ENCODE measurements at regions of chr6 and their contacts with region 1.

Region 1: DNA sequence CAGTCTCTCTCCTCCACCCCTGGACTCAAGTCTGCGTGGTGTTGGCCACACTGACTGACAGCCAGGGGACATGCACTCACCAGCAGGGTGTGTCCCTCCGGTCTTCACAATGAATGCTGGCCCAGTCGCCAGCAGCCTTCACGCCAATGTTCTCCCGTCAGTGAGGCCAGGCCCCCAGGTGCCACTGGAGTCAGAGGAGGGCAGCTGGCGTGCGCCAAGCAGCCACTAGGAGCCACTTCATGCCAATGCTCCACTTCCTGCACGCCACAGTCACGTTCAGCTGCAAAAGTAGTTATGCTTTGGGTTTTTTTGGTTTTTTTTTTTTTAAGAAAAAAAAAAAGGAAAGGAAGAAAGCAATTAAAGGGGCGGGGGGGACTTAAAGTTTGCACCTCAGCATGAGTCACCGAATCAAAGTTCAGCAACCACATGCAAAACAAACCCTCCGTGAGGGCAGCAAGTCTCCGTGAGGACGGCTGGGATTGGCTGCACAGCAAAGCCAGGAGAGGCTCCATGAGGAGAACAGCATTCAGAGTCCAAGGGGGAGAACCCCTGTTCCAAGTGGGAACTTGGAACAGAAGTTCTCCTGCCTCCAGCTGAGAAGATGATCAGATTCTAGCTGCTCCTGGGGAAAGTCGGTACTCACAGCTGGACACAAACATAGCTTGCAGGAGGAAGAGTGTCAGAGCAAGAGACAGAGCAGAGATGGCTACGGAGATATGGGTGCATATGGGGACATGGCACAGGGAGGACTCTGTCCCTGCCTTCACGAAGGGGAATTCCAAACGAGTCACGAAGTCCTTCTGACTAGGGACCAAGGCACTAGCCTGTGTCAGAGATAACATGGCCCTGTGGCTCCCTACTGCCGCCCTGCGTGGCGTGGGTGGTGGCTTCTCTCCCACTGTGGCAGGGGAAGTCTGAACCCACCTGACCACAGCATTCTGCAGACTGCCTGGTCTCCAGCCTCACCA is at the start of gene ZC3H12D:
- DNase-seq: peak; percentile 68 to 93 (median 81)
- H3K4me3 ChIP-seq: peak within 1 kb of the TSS; percentile 68
- H3K4me3 Mint-ChIP-seq: peak within 1 kb of the TSS; percentile 88 to 99 (median 95)
- H3K27ac ChIP-seq: peak within 1 kb of the TSS; percentile 73
- H3K27ac Mint-ChIP-seq: peak within 1 kb of the TSS; percentile 98 to 100 (median 99)
- H3K4me1 ChIP-seq: peaks cover 34% of the 10 kb centered on the region
- H3K4me1 Mint-ChIP-seq: peaks cover 35 to 56% (median 42%) of the 10 kb centered on the region in 3 donors
- H3K27me3 ChIP-seq: no peaks in the 10 kb centered on the region
- H3K27me3 Mint-ChIP-seq: no peaks in the 10 kb centered on the region
- total RNA-seq, gene ZC3H12D: 83.5 to 84.5 TPM

Region 2: DNA sequence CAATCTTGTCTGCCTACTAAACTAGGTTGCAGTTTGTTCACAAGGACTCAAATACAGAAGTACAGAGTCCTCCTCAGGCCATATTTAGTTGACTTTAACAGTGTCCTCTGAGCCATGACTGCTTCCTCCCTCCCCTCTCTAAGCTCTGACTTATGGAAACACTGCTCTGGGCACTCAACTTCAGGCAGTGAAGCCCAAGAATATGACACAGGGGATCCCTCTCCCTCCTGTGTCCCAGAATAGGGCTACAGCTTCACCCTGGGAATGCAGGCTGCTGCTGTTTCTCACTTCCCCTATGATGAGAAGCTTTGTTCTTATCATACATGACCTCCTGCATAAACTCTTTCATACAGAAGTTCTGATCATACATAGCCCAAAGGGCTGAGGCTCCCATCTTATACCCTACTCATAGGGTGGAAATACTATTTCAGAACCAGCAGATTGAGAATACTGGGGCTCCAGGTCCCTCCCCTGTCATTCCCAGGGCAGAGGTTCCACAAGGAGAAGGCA is 835.5 kb before region 1 on chr6:
- CTCF ChIA-PET with region 1: no interaction called
- POLR2A ChIA-PET with region 1: interaction called, 11 read pairs
- DNase-seq: no peak
- H3K4me3 ChIP-seq: no peak overlapping the region
- H3K4me3 Mint-ChIP-seq: peak overlapping the region in 1 of 7 donors; percentile 63
- H3K27ac ChIP-seq: no peak overlapping the region
- H3K27ac Mint-ChIP-seq: no peak overlapping the region
- H3K4me1 ChIP-seq: no peaks in the 10 kb centered on the region
- H3K4me1 Mint-ChIP-seq: no peaks in the 10 kb centered on the region
- H3K27me3 ChIP-seq: no peaks in the 10 kb centered on the region
- H3K27me3 Mint-ChIP-seq: peaks cover 4 to 53% of the 10 kb centered on the region in 2 donors

Region 3: DNA sequence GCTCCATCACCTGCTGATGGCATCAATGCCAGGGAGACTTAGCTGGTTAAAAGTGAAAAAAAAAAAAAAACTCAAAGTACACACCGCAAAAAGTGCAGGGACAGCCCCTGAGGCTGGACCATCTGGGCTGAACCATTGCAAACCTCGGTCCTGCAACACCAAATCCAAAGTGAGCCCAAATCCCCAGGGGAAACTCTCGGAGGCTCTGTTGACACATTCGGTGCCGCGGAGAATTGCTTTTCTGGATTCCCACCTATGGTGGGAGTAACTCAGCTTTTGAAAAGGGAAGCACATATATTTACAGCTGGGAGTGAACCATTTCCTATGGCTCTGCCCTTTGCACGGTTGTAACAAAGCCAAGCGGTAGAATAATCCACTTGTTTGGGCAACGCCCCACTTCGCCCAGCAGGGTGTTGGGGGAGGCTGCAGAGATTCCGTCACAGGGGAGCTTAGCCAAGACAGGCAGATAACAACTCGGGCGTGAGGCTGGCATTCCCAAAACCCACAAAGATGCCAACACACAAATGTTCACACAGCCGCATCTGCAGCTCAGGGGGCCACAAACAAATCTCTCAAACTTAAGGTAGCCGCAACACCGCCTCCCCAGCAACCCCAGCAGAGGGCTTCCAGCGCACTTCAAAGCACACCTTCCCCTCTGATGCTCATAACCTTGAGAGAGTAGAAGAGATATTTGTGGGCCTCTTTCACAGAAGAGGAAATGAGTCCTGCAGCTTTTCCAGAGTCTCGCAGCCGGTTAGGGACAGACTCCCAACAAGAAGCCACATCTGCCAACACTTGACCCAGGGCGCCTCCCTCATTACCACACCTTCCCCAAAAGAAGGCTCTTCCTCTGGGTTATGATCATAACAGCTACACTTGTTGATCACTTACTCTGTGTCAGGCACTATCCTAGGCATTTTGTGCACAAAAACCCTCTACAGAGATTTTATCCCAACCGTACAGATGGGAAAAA is 11.7 kb before region 1 on chr6:
- CTCF ChIA-PET with region 1: interaction called, 20 read pairs
- POLR2A ChIA-PET with region 1: no interaction called
- DNase-seq: peak in 1 of 5 donors; percentile 36
- H3K4me3 ChIP-seq: no peak overlapping the region
- H3K4me3 Mint-ChIP-seq: peak overlapping the region in 5 of 7 donors; percentile 5 to 62 (median 33)
- H3K27ac ChIP-seq: no peak overlapping the region
- H3K27ac Mint-ChIP-seq: peak overlapping the region in 6 of 8 donors; percentile 22 to 85 (median 66)
- H3K4me1 ChIP-seq: peaks cover 30% of the 10 kb centered on the region
- H3K4me1 Mint-ChIP-seq: peaks cover 29 to 68% (median 51%) of the 10 kb centered on the region in 3 donors
- H3K27me3 ChIP-seq: no peaks in the 10 kb centered on the region
- H3K27me3 Mint-ChIP-seq: no peaks in the 10 kb centered on the region

Region 4: DNA sequence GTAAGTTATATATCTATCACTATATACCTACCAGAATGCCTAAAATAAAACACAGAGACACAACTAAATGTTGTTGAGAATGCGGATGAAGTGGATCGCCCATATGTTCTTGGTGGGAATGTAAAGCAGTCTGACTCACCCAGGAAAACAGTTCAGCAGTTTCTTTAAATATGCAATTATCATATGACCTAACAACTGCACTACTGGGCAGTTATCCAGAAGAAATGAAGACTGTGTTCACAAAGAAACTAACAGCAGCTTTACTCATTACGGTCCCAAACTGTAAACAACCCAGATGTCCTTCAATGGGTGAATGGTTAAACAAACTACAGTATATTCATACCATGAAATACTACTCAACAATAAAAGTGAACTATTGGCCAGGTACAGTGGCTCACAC is 14.0 kb after region 1 on chr6:
- CTCF ChIA-PET with region 1: interaction called, 44 read pairs
- POLR2A ChIA-PET with region 1: interaction called, 39 read pairs
- DNase-seq: no peak
- H3K4me3 ChIP-seq: no peak overlapping the region
- H3K4me3 Mint-ChIP-seq: no peak overlapping the region
- H3K27ac ChIP-seq: no peak overlapping the region
- H3K27ac Mint-ChIP-seq: peak overlapping the region in 6 of 8 donors; percentile 3 to 70 (median 24)
- H3K4me1 ChIP-seq: peaks cover 32% of the 10 kb centered on the region
- H3K4me1 Mint-ChIP-seq: peaks cover 14 to 53% (median 40%) of the 10 kb centered on the region in 3 donors
- H3K27me3 ChIP-seq: no peaks in the 10 kb centered on the region
- H3K27me3 Mint-ChIP-seq: no peaks in the 10 kb centered on the region

Region 5: DNA sequence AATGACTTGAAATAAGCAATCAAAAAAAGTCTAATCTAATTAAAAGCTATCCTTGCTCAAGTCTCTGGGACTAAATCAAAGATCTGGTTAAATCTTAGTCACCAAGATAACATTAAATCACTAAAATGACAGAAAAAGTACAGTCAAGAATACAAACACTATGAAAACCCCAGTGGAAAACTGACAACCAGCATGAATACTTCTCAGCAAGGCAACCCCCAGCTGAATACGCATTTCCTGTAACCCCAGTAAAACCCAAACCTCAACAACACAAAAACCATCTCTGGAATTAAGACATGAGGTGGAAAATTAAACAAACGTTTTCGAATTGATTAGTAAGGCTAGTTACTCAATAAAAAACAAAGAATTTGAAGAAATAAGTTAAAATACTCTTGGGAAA is 23.5 kb after region 1 on chr6:
- CTCF ChIA-PET with region 1: no interaction called
- POLR2A ChIA-PET with region 1: interaction called, 19 read pairs
- DNase-seq: peak in 3 of 5 donors; percentile 57 to 72 (median 65)
- H3K4me3 ChIP-seq: no peak overlapping the region
- H3K4me3 Mint-ChIP-seq: peak overlapping the region in 5 of 7 donors; percentile 9 to 73 (median 41)
- H3K27ac ChIP-seq: no peak overlapping the region
- H3K27ac Mint-ChIP-seq: peak overlapping the region in 7 of 8 donors; percentile 65 to 92 (median 83)
- H3K4me1 ChIP-seq: peaks cover 18% of the 10 kb centered on the region
- H3K4me1 Mint-ChIP-seq: peaks cover 25 to 30% (median 30%) of the 10 kb centered on the region in 3 donors
- H3K27me3 ChIP-seq: no peaks in the 10 kb centered on the region
- H3K27me3 Mint-ChIP-seq: no peaks in the 10 kb centered on the region

Region 6: DNA sequence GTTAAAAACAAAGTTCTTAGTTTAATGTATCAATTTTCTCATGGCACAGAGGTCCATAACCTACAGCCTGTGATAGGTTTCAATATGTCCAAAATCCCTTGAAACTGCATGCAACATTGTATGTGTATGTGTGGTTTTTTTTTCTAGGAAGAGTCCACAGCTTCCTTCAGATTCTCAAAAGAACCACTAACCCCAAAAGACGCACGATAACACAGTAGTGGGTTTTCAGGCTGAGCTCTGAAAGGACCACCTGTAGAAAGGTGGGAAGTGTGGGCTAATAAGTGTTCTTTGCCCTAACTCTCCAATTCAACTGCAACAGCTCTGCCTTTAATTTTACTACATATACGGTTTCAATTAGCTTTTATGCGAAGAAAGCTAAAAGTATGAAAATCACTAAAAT is 175.0 kb after region 1 on chr6:
- CTCF ChIA-PET with region 1: no interaction called
- POLR2A ChIA-PET with region 1: no interaction called
- DNase-seq: no peak
- H3K4me3 ChIP-seq: no peak overlapping the region
- H3K4me3 Mint-ChIP-seq: no peak overlapping the region
- H3K27ac ChIP-seq: no peak overlapping the region
- H3K27ac Mint-ChIP-seq: no peak overlapping the region
- H3K4me1 ChIP-seq: no peaks in the 10 kb centered on the region
- H3K4me1 Mint-ChIP-seq: no peaks in the 10 kb centered on the region
- H3K27me3 ChIP-seq: no peaks in the 10 kb centered on the region
- H3K27me3 Mint-ChIP-seq: no peaks in the 10 kb centered on the region

Measured in CD8-positive, alpha-beta memory T cell (primary cell).